ENCODE measurements at regions of chr10 and their contacts with region 1.

Region 1: GRCh38 chr10:118568327-118568848 is 27.1 kb downstream of the PRLHR start:
- DNase-seq: peak; percentile 79
- H3K4me3 Mint-ChIP-seq: no peak overlapping the region
- H3K27ac Mint-ChIP-seq: no peak overlapping the region
- H3K4me1 Mint-ChIP-seq: peaks cover 30% of the 10 kb centered on the region
- H3K27me3 Mint-ChIP-seq: no peaks in the 10 kb centered on the region
- CTCF ChIP-seq: peak; percentile 83

Region 2: GRCh38 chr10:118584181-118584954 is 16.0 kb after region 1 on chr10:
- CTCF ChIA-PET with region 1: interaction called, 42 read pairs
- POLR2A ChIA-PET with region 1: interaction called, 3 read pairs
- intact Hi-C with region 1: no loop called
- DNase-seq: peak; percentile 89
- H3K4me3 Mint-ChIP-seq: no peak overlapping the region
- H3K27ac Mint-ChIP-seq: no peak overlapping the region
- H3K4me1 Mint-ChIP-seq: peaks cover 27% of the 10 kb centered on the region
- H3K27me3 Mint-ChIP-seq: no peaks in the 10 kb centered on the region
- CTCF ChIP-seq: no peak

Region 3: DNA sequence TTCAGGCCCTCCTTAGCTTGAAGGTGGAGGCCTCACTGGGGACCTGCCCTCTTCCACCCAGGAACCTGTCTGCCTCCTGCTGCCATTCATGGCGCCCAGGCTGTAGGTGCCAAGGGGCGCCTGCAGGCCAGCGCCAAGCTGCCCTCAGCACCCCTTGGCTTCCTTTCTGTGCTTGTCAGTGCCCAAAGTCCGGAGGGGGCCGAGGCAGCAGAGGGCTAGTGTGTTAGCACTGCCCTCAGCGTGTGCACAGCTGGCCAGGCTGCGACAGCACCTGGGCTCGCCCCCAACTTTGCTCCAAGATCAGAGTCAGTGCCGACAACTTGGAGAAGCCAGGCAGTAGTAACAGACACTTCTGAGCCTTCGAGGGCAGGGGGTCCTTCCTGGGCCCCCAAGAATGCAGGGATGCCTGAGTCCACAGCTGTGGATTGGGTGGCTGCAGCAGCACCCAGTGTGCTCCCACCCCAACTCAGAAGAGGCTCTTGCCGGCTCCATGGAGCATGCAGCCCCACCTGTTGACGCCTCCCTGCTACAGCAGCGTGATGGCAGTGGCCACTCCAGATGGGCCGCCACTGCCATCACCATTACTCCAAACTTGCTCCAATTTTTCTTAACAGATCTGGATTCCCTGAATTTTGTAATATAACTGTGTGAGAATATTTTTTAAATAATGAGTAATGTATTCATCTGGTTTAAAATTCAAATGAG is 144.7 kb after region 1 on chr10:
- CTCF ChIA-PET with region 1: interaction called, 161 read pairs
- POLR2A ChIA-PET with region 1: interaction called, 4 read pairs
- intact Hi-C with region 1: no loop called
- DNase-seq: no peak
- H3K4me3 Mint-ChIP-seq: no peak overlapping the region
- H3K27ac Mint-ChIP-seq: no peak overlapping the region
- H3K4me1 Mint-ChIP-seq: no peaks in the 10 kb centered on the region
- H3K27me3 Mint-ChIP-seq: no peaks in the 10 kb centered on the region
- CTCF ChIP-seq: no peak

Region 4: DNA sequence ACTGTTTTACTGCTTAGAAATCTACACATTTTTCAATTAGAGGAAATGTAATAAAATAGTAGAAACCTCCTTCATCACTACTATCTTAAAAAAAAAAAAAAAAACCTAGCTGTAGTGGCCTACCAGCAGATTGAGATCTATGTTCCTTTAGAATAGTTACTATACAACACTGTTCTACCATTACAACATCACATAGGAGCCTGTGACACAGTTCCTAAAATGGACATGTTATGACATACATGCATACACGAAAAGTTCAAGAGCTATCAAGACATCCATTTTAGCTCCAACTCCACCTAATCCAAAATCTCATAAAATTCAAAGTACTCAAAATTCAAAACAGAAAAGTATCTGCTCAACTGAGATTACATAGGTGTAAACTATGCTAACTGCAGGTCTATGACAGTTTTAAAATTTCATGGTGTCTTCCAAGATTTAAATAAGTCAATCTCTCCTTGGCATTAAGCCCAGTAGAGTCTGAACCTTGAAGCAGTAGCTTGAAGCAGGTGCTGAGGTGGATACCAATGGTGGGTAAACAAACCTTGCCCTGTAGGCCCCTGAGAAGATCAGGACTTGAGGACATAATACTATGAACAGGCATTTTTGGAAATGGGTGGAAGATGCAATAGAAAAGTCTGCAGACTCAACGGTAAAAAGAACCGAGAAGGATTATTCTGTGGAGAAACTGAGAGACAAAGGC is 169.4 kb after region 1 on chr10:
- CTCF ChIA-PET with region 1: interaction called, 20 read pairs
- POLR2A ChIA-PET with region 1: no interaction called
- intact Hi-C with region 1: no loop called
- DNase-seq: no peak
- H3K4me3 Mint-ChIP-seq: no peak overlapping the region
- H3K27ac Mint-ChIP-seq: peak overlapping the region; percentile 29
- H3K4me1 Mint-ChIP-seq: peaks cover 27% of the 10 kb centered on the region
- H3K27me3 Mint-ChIP-seq: no peaks in the 10 kb centered on the region
- CTCF ChIP-seq: no peak

Region 5: GRCh38 chr10:118850418-118851061 is 282.2 kb after region 1 on chr10:
- CTCF ChIA-PET with region 1: interaction called, 10 read pairs
- POLR2A ChIA-PET with region 1: no interaction called
- intact Hi-C with region 1: loop called (anchors 1 kb)
- DNase-seq: peak; percentile 81
- H3K4me3 Mint-ChIP-seq: no peak overlapping the region
- H3K27ac Mint-ChIP-seq: no peak overlapping the region
- H3K4me1 Mint-ChIP-seq: peaks cover 13% of the 10 kb centered on the region
- H3K27me3 Mint-ChIP-seq: no peaks in the 10 kb centered on the region
- CTCF ChIP-seq: peak; percentile 41

Region 6: DNA sequence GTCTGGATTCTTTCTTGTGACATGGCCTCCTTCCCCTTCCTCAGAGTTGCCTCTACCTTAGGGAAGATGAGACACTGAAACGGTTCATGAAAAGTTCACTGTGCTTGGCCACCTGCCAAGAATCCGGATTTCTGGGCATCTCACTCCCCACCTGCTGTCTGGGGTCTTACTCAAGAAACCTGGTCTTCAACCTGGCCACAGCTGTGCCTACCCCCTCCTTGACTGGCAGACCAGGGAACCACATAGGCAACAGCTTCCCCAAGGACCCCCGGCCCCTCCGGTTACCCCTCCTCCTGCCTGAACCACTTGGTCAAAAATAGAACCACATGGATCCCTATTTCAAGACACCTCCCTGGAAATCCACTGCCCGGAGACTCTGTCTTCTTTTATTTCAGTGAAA is 402.4 kb after region 1 on chr10:
- CTCF ChIA-PET with region 1: no interaction called
- POLR2A ChIA-PET with region 1: no interaction called
- intact Hi-C with region 1: no loop called
- DNase-seq: peak; percentile 23
- H3K4me3 Mint-ChIP-seq: no peak overlapping the region
- H3K27ac Mint-ChIP-seq: no peak overlapping the region
- H3K4me1 Mint-ChIP-seq: no peaks in the 10 kb centered on the region
- H3K27me3 Mint-ChIP-seq: no peaks in the 10 kb centered on the region
- CTCF ChIP-seq: no peak